Activated naive CD4-positive, alpha-beta T cell treated with anti-CD3 and anti-CD28 coated beads for 36 hours (primary cell): ENCODE measurements at regions of chr10 and their contacts with region 1.

Region 1: DNA sequence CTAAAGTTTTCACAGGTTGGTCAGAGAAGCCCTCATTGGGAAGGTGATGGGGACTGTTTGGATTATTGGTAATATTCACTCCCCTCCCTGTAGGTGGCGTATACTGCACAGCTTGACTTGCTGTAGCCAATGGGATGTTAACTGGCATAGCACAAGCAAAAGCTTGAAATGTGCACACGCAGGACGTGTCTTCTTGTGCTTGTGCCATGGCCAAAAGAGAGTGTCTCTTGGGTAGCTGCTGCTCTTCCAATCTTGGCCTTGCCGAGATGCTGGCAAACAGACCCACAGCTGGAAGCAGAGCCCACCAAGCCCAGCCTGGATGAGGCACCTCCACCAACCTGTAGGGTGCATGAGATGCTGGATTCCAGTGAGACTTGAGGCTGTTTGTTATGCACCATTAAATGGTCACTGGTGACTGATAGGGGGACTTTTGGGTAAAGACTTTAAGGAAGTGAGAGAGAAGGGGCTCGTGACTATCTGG is 266.0 kb downstream of the GRID1 start:
- DNase-seq: no peak
- H3K4me3 Mint-ChIP-seq: no peak overlapping the region
- H3K27ac Mint-ChIP-seq: no peak overlapping the region
- H3K4me1 Mint-ChIP-seq: no peaks in the 10 kb centered on the region
- H3K27me3 Mint-ChIP-seq: peaks cover 2% of the 10 kb centered on the region

Region 2: GRCh38 chr10:86127274-86127819 is 26.7 kb after region 1 on chr10:
- CTCF ChIA-PET with region 1: no interaction called
- intact Hi-C with region 1: no loop called
- DNase-seq: no peak
- H3K4me3 Mint-ChIP-seq: no peak overlapping the region
- H3K27ac Mint-ChIP-seq: no peak overlapping the region
- H3K4me1 Mint-ChIP-seq: no peaks in the 10 kb centered on the region
- H3K27me3 Mint-ChIP-seq: peaks cover 13% of the 10 kb centered on the region

Region 3: GRCh38 chr10:86363184-86363832 is 262.7 kb after region 1 on chr10:
- CTCF ChIA-PET with region 1: no interaction called
- intact Hi-C with region 1: loop called (anchors 5 kb)
- DNase-seq: no peak
- H3K4me3 Mint-ChIP-seq: no peak overlapping the region
- H3K27ac Mint-ChIP-seq: no peak overlapping the region
- H3K4me1 Mint-ChIP-seq: peaks cover 14% of the 10 kb centered on the region
- H3K27me3 Mint-ChIP-seq: peaks cover 47% of the 10 kb centered on the region